ENCODE measurements at regions of chr11 and their contacts with region 1.

Region 1: DNA sequence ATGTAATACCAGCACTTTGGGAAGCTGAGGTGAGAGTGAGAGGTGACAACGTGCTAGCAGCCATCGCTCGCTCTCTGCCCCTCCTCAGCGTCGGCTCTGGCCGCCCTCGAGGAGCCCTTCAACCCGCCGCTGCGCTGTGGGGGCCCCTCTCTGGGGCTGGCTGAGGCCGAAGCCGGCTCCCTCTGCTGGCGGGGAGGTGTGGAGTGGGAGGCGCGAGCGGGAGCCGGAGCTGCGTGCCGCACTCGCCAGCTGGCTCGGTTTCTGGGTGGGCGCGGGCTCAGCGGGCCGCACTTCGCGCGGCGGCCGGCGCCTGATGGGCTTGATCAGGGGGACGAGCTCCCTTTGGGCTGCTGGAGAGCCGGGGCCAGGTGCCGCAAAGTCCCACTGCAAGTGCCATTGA is 98.9 kb upstream of the UBASH3B start:
- H3K4me3 ChIP-seq: no peak overlapping the region; the same call in 1 of the 2 replicates
- H3K27ac ChIP-seq: no peak overlapping the region
- H3K4me1 ChIP-seq: no peaks in the 10 kb centered on the region
- CTCF ChIP-seq: no peak

Region 2: DNA sequence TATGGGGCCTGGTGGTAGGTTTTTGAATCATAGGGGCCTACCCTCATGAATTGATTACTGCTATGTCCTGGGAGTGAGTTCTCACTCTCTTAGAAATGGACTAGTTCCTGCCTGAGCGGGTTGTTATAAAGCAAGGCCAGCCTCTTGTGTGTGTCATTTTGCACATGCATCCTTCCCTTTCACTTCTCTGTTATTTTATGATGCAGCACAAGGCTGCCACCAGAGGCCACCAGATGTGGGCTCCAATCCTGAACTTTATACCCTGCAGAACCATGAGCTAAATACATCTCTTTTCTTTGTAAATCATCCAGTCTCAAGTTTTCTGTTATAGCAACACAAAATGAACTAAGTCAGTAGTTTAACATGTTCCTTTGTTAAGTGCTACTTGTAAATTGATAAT is 691.9 kb before region 1 on chr11:
- CTCF ChIA-PET with region 1: interaction called, 11 read pairs
- POLR2A ChIA-PET with region 1: no interaction called
- H3K4me3 ChIP-seq: no peak overlapping the region
- H3K27ac ChIP-seq: no peak overlapping the region
- H3K4me1 ChIP-seq: no peaks in the 10 kb centered on the region
- CTCF ChIP-seq: no peak

Region 3: DNA sequence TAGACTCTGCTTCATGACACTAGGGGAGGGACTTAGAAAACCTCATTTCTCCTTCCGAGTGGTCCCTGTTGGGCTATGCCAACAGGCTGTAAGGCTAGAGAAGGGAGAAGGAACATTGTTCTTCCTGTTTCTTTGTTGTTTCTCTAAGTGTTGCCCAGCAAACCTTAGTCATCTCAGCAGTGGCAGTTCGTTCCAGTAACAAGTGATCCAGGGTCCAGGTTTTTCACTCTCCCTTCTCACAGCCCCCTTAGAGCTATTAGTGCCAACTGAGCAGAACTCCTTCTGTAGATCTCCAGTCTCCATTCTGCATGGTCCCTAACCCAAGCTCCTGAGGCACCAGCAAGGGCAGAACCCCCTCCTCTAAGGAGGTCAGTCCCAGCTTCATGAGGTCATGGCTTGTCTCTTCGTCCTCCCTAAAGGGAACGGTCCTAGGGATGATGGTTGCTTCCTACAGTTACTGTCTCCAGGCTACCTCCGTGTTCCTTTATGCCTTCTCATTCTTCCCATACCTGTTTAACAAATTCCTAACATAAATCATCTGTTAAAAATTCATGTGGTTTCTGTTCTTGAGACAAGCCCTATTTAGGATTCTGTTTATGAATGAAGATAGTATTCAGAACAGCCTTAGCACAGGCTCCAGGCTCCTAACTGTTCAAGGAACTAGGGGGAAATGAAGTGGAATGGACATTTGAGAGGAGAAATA is 69.7 kb before region 1 on chr11:
- CTCF ChIA-PET with region 1: no interaction called
- POLR2A ChIA-PET with region 1: no interaction called
- H3K4me3 ChIP-seq: no peak overlapping the region
- H3K27ac ChIP-seq: no peak overlapping the region
- H3K4me1 ChIP-seq: no peaks in the 10 kb centered on the region
- CTCF ChIP-seq: no peak

Region 4: GRCh38 chr11:122505304-122506006 is 51.1 kb before region 1 on chr11:
- CTCF ChIA-PET with region 1: interaction called, 11 read pairs
- POLR2A ChIA-PET with region 1: no interaction called
- H3K4me3 ChIP-seq: no peak overlapping the region
- H3K27ac ChIP-seq: no peak overlapping the region
- H3K4me1 ChIP-seq: no peaks in the 10 kb centered on the region
- CTCF ChIP-seq: peak; percentile 76; the same call in 1 of the 2 replicates

Region 5: DNA sequence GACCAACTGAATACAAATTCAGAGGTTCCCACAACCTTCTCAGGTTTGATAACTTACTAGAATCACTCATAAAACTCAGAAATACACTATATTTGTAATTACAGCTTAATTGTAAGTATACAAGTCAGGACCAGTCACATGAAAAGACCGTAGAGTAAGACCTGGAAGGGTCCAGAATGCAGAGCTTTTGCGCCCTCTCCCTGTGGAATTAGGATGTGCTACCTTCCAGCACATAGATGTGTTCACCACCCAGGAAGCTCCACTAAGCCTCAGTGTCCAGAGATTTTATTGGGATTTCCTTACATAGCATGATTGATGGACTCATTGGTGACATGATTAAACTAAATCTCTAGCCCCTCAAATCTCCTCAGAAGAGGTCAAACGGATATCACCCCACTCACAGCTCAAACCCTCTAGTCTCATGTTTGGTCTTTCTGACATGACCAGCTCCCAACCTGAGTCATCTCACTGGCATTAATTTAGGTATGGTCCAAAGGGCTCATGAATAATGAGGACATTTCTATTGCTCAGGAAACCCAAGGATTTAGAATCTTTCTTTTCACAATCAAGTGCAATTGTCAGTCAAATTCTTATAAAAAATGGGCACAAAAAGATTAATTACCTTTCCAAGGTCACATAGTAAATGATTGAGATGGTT is 21.7 kb after region 1 on chr11:
- CTCF ChIA-PET with region 1: interaction called, 5 read pairs
- POLR2A ChIA-PET with region 1: interaction called, 10 read pairs
- H3K4me3 ChIP-seq: no peak overlapping the region
- H3K27ac ChIP-seq: no peak overlapping the region
- H3K4me1 ChIP-seq: no peaks in the 10 kb centered on the region
- CTCF ChIP-seq: no peak